AG04450 (cell line): ENCODE measurements at regions of chr19 and their contacts with region 1.

Region 1: DNA sequence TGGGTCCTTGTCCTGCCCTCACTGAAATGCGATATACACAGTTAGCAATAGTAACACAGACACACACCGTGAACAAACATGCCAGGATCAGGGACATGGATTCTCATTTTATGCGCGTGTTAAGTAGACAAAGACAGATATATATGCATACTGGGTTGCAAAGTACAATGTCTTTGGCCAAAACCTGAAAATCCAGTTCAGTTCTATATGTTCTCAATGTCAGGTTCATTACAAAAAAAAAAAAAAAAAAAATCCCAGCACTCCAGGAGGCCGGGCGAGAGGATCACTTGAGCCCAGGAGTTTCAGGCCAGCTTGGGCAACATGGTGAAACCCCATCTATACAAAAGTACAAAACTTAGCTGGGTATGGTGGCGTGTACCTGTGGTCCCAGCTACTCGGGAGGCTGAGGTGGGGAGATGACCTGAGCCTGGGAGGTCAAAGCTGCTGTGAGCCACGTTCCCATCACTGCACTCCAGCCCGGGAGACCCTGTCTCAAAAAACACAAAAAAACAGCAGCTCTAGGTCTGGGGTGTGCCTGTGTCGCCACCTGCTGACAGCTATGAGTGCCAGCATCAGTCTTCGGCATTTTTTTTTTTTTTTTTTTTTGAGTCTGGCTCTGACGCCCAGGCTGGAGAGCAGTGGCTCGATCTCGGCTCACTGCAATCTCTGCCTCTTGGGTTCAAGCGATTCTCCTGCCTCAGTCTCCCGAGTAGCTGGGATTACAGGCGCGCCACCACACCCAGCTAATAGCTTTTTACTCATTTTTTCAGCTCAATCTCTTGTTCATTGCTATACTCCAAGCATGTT is 10.3 kb downstream of the AP2S1 start:
- DNase-seq: no peak
- H3K4me3 ChIP-seq: no peak overlapping the region
- H3K27ac ChIP-seq: no peak overlapping the region
- H3K27me3 ChIP-seq: no peaks in the 10 kb centered on the region
- CTCF ChIP-seq: peak; percentile 91

Region 2: DNA sequence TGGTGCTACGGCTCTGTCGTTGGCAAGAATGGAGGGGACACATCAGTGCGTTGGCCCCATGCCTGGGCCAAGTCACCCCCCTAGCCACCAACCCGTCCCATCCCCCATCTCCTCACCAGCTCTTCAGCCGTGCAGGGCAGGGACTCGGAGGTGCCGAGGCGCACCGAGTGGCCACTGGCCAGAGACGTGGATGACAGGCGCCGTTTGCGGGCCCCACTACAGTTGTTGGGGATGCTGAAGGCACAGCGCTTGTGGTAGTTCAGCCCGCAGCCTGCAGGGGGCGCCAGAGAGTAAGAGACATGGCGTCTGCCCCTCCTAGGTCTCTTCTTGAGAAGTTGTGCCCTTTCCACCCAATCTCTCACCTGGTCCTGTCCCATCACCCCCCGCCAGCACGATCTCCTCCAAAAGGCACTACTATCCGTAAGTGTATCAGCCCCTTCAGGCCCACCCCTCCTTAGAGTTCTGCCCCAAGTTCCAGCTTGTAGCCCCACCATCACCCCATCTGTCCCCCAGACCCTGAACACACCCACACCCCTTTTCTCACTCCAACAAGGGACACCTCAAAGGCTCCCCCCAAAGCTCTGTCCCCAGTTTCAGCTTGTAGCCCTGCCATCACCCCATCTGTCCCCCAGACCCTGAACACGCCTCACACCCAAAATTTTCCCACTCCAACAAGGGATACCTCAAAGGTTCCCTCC is 135.8 kb before region 1 on chr19:
- CTCF ChIA-PET with region 1: interaction called, 18 read pairs
- POLR2A ChIA-PET with region 1: no interaction called
- DNase-seq: no peak
- H3K4me3 ChIP-seq: no peak overlapping the region
- H3K27ac ChIP-seq: no peak overlapping the region
- H3K27me3 ChIP-seq: no peaks in the 10 kb centered on the region
- CTCF ChIP-seq: peak; percentile 91

Region 3: DNA sequence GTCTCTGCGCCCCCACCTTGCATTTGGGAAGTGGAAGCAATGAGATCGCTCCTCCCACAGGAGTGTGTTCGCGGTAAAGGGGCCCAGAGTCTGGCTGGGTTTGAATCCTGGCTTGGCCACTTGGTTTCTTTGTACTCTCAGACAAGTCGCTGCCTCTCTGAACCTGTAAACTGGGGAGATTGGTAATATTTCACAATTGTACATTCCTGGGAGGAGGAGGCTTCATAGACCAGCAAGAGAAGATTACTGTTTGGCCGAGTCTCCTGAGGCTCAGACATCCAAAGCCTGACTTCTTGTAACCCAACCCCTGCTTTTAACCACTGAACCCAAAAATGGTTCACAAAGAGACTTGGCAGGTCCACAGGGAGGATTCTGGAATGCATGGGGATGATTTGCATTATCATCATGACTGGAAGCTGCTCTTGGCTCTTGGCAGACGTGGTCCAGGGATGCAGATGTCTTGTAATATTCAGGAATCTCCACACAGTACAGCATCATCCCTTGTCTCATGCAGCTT is 80.5 kb before region 1 on chr19:
- CTCF ChIA-PET with region 1: interaction called, 52 read pairs
- POLR2A ChIA-PET with region 1: interaction called, 6 read pairs
- DNase-seq: peak; percentile 94
- H3K4me3 ChIP-seq: no peak overlapping the region
- H3K27ac ChIP-seq: peak overlapping the region; percentile 96
- H3K27me3 ChIP-seq: no peaks in the 10 kb centered on the region
- CTCF ChIP-seq: no peak

Region 4: DNA sequence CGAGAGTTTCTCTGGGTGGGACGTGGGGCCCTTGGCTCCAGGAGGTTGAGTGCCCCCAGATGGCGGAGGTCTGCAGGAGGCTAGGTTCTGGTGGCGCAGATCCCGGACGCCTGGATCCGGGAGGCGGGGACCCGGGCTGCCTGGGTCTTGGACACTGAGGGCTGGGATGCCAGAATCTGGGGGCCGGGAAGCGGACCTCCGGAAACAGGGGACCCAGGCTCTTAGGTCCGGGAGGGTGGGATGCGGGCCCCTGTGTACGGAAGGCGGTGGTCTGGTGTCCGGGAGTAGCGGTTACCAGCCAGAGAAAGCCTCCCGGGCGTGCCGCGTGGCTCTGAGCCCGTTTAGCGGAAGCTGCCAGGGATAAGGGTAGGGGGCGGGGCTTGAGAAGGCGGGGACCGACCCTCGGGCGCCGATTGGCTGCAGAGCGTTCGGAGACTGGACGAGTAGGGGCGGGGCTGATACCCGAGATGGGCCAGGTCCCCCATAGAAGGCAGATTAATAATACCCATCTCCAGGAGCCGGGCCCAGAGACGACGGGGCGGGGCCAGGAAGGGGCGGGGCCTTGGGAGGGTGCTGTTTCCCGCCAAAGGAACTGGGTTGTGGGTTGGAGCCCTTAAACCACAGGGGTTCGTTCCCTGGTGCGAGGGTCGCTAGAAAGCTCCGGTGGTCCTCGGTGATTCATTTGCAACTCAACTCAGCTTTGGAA is 51.9 kb before region 1 on chr19 and contains the start of gene SLC1A5:
- CTCF ChIA-PET with region 1: interaction called, 32 read pairs
- POLR2A ChIA-PET with region 1: interaction called, 52 read pairs
- DNase-seq: peak; percentile 92
- H3K4me3 ChIP-seq: peak within 1 kb of the TSS; percentile 94
- H3K27ac ChIP-seq: peak within 1 kb of the TSS; percentile 97
- H3K27me3 ChIP-seq: no peaks in the 10 kb centered on the region
- CTCF ChIP-seq: no peak
- polyA plus RNA-seq, gene SLC1A5: 314 and 342 TPM in 2 replicates

Region 5: GRCh38 chr19:46856050-46857022 is 16.0 kb after region 1 on chr19:
- CTCF ChIA-PET with region 1: interaction called, 10 read pairs
- POLR2A ChIA-PET with region 1: interaction called, 3 read pairs
- DNase-seq: peak; percentile 89
- H3K4me3 ChIP-seq: peak overlapping the region; percentile 55
- H3K27ac ChIP-seq: peak overlapping the region; percentile 97
- H3K27me3 ChIP-seq: no peaks in the 10 kb centered on the region
- CTCF ChIP-seq: peak; percentile 85

Region 6: GRCh38 chr19:46990991-46991676 is 150.8 kb after region 1 on chr19:
- CTCF ChIA-PET with region 1: interaction called, 41 read pairs
- POLR2A ChIA-PET with region 1: interaction called, 4 read pairs
- DNase-seq: peak; percentile 74
- H3K4me3 ChIP-seq: no peak overlapping the region
- H3K27ac ChIP-seq: no peak overlapping the region
- H3K27me3 ChIP-seq: no peaks in the 10 kb centered on the region
- CTCF ChIP-seq: peak; percentile 95